ENCODE measurements at regions of chr3 and their contacts with region 1.

Region 1: DNA sequence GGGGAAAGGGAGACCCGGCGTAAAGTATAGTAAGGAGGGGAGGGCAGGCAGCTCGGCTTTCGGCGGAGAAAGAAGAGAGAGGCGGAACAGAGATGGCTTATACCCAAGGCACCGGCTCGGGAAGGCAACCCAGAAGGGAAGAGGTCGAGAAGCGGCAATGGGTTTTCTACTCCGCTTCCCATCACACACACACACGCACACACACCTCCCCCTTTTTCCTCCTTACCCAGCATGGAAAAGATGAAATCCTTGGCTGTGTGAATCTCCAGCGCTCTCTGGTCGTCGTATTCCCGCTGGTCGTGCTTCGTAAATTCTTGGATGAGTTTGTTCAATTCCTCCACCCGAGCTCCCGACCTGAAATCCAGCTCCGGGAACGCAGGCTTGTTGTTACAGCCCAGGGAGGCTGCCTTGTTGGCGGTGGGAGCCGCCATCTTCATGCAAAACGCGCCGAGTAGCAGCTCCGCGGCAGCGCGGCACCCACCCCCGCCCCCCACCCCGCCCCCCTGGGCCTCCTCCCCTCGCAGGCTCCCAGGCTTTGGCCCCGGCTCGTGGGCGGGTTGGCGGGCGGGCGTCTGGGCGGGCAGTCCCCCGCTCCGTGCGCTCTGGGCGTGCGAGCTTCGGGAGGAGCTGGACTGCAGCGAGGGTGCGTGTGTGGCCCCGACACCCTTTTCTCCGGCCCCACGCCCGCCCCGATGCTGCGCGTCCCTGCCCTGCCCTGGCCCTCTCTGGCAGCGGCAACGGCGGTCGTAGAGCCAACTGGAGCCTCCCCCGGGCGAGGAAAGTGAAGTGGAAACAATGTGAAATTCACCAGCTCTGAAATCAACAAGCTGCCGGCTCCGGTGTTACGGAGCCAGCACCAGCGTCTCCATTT is at the start of gene MB21D2:
- DNase-seq: peak; percentile 78 to 86
- H3K4me3 ChIP-seq: peak within 1 kb of the TSS; percentile 79
- H3K27ac ChIP-seq: peak within 1 kb of the TSS; percentile 79
- H3K4me1 ChIP-seq: peaks cover 29% of the 10 kb centered on the region
- H3K27me3 ChIP-seq: no peaks in the 10 kb centered on the region
- CTCF ChIP-seq: no peak
- total RNA-seq, gene MB21D2: 4.5 and 5.1 TPM in 2 replicates

Region 2: DNA sequence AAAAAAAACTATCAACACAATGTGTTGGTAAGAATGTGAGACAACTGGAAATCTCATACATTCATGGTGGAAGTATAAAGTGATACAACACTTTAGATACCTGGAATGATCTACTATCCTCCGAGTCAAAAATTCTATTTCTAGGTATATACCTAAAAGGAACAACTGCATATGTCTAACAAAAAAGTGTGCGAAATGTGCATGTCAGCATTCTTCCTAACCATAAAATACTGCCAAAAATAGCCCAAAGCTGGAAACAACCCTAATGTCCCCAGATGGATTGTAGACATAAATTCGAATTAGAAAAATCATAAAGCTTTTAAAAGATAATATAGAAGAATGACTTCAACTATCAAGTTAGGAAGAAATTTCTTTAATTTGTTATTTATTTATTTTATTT is 139.1 kb before region 1 on chr3:
- CTCF ChIA-PET with region 1: no interaction called
- POLR2A ChIA-PET with region 1: no interaction called
- intact Hi-C with region 1: no loop called
- DNase-seq: no peak
- H3K4me3 ChIP-seq: no peak overlapping the region
- H3K27ac ChIP-seq: no peak overlapping the region
- H3K4me1 ChIP-seq: no peaks in the 10 kb centered on the region
- H3K27me3 ChIP-seq: no peaks in the 10 kb centered on the region
- CTCF ChIP-seq: no peak

Region 3: DNA sequence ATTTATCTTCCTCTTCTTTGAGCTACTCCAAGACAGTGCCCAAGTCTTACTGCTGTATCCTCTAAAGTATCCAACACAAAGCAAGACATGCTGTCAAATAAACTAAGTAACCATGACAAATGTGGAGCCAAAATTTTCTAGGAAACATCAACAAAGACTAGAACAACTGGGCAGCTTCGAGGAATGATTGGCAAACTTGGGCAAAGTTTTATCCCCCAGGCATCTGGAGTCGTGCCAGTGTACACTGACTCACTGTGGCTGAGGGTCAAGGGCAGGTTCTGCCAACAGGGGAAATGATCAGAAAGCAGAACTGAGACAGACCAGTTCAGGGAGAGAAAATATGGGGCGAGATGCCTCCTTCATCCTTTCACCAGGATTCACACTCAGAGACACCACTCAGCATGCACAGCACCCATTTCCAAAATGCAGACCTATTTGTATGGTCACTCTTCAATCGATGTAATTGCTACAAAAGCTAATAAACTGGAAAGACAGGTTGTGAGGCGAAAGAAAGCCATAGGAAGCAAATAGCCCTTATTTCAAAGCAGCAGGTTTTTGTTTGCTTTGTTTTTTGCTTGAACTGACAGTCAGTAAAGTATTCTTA is 65.7 kb before region 1 on chr3:
- CTCF ChIA-PET with region 1: interaction called, 3 read pairs
- POLR2A ChIA-PET with region 1: no interaction called
- intact Hi-C with region 1: loop called (anchors 1 kb)
- DNase-seq: peak; percentile 99 to 100
- H3K4me3 ChIP-seq: no peak overlapping the region
- H3K27ac ChIP-seq: peak overlapping the region; percentile 17
- H3K4me1 ChIP-seq: peaks cover 27% of the 10 kb centered on the region
- H3K27me3 ChIP-seq: no peaks in the 10 kb centered on the region
- CTCF ChIP-seq: no peak

Region 4: DNA sequence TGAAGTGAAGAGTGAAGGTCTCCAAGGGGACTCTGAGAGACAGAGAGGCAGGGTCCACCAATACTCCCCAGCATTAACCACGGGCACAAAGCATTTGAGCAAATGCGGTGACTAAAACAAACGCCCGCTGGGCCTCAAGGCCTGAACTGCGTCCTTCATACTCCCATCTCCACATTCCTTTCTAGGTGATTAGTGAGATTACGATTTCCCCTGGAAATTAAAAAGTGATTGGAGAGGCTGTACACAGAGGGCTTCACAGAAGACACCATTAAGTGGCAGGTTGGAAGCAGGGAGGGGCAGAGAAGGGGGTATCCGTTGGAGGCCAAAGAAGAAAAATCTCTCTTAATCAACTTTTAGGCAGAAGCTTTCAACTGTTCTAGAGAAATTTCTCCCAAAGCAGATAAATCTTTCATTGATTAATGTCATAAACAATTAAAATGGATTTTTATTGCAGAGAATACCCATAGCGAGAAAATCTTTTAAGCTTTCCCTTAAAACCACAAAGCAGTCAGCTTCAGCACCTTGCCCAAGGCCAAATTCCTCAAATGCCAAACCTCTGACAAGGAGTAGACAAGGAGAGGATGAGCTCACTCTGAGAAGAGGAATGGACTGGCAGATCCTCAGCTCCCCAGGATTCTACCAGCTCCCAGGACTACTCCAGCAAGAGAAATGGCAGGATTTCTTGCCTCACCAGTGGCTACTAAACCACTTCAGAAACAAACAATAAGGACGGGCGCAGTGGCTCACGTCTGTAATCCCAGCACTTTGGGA is 38.1 kb before region 1 on chr3:
- CTCF ChIA-PET with region 1: interaction called, 3 read pairs
- POLR2A ChIA-PET with region 1: interaction called, 5 read pairs
- intact Hi-C with region 1: loop called (anchors 1 kb)
- DNase-seq: peak; percentile 92 to 100
- H3K4me3 ChIP-seq: peak overlapping the region; percentile 37; the same call in 1 of the 2 replicates
- H3K27ac ChIP-seq: no peak overlapping the region
- H3K4me1 ChIP-seq: peaks cover 42% of the 10 kb centered on the region
- H3K27me3 ChIP-seq: no peaks in the 10 kb centered on the region
- CTCF ChIP-seq: no peak

Region 5: GRCh38 chr3:192892981-192893700 is 24.5 kb before region 1 on chr3:
- CTCF ChIA-PET with region 1: interaction called, 4 read pairs
- POLR2A ChIA-PET with region 1: interaction called, 4 read pairs
- intact Hi-C with region 1: loop called (anchors 1 kb)
- DNase-seq: peak; percentile 89 to 99
- H3K4me3 ChIP-seq: peak overlapping the region; percentile 44; the same call in 1 of the 2 replicates
- H3K27ac ChIP-seq: peak overlapping the region; percentile 88
- H3K4me1 ChIP-seq: peaks cover 96% of the 10 kb centered on the region
- H3K27me3 ChIP-seq: no peaks in the 10 kb centered on the region
- CTCF ChIP-seq: no peak

Region 6: GRCh38 chr3:192929755-192930547 is 12.3 kb after region 1 on chr3:
- CTCF ChIA-PET with region 1: no interaction called
- POLR2A ChIA-PET with region 1: no interaction called
- intact Hi-C with region 1: no loop called
- DNase-seq: no peak
- H3K4me3 ChIP-seq: no peak overlapping the region
- H3K27ac ChIP-seq: no peak overlapping the region
- H3K4me1 ChIP-seq: no peaks in the 10 kb centered on the region
- H3K27me3 ChIP-seq: no peaks in the 10 kb centered on the region
- CTCF ChIP-seq: no peak

Region 7: DNA sequence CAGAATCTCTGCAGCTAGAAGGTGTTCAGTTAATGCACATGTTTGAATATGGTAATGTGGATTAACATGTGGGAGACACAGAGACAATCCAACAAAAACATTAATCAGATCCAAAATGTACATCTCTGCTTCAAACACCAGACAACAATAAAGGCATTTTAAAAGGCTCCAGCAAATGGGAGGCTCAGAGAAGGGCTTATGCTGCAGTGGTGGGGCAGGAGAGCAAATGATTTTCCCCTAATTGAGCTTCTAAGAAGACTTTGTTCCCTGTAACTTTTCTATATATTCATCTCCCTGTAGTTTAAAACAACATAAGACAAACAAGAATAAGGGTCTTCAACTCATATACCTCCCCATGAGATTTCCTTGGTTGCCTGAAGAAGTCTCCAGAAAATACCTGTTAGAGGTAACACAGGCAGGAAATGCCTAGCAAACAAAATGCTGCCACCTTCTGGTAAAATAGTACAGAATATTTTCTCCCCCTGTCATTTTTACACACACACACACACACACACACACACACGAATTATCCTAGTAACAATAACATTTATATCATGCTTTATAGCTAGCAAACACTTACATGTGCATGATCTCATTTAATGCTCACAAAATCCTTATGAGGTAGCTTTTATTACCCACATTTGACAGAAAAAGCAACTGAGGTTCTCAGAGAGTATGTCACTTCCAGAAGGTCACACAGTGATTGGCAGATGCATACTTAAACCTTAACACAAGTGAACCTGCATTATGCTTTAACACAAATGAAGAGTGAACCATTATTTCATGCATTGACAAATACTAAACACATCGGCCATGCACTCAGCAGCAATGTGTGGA is 123.4 kb after region 1 on chr3:
- CTCF ChIA-PET with region 1: interaction called, 3 read pairs
- POLR2A ChIA-PET with region 1: no interaction called
- intact Hi-C with region 1: loop called (anchors 1 kb)
- DNase-seq: peak in 1 of 2 experiments; percentile 58
- H3K4me3 ChIP-seq: no peak overlapping the region
- H3K27ac ChIP-seq: no peak overlapping the region
- H3K4me1 ChIP-seq: no peaks in the 10 kb centered on the region
- H3K27me3 ChIP-seq: no peaks in the 10 kb centered on the region
- CTCF ChIP-seq: peak; percentile 81

Region 8: DNA sequence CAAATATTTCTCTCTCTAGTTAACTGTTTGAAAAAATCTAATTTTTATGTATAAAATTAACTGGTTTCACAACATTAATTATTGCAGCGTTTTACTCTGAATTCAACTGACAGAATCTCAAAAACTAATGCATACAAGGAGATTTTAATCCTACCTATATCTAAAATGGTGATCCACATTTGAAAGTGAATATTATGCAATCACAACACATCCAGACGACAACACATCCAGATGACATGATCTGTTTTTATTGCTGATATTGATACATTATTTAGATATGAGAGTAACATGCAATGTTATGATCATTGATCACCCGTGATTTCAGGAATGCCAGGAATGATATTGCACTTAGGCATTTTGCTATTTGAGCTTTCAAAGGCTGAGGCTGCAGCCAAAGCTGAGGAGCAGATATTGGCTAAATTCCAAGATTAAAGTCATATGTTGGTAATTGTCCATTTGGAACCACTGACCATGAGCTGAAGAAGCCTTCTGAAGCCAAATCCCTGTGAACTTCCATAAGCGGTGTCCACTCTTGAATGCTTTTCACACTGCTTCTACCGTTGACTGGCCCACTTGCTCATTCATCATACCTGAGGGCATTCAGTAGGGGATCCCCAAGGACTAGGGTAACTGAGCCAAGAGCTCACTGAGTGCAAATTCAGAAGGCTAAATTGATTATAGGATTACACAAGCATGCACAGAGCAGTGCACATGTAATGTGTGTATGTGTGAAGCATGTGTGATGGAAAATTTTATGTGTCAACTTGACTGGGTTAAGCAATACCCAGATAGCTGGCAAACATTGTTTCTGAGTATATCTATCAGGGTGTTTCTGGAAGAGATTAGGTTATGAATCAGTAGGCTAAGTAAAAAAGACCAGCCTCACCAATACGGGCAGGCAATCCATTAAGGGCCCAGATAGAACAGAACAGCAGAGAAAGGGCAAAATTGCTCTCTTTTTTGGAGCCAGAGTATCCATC is 231.1 kb after region 1 on chr3:
- CTCF ChIA-PET with region 1: no interaction called
- POLR2A ChIA-PET with region 1: no interaction called
- intact Hi-C with region 1: no loop called
- DNase-seq: no peak
- H3K4me3 ChIP-seq: no peak overlapping the region
- H3K27ac ChIP-seq: no peak overlapping the region
- H3K4me1 ChIP-seq: no peaks in the 10 kb centered on the region
- H3K27me3 ChIP-seq: no peaks in the 10 kb centered on the region
- CTCF ChIP-seq: no peak

Region 9: GRCh38 chr3:193572426-193572908 is 654.8 kb after region 1 on chr3:
- CTCF ChIA-PET with region 1: no interaction called
- POLR2A ChIA-PET with region 1: no interaction called
- intact Hi-C with region 1: loop called (anchors 2 kb)
- DNase-seq: peak; percentile 69
- H3K4me3 ChIP-seq: no peak overlapping the region
- H3K27ac ChIP-seq: no peak overlapping the region
- H3K4me1 ChIP-seq: peaks cover 14% of the 10 kb centered on the region
- H3K27me3 ChIP-seq: no peaks in the 10 kb centered on the region
- CTCF ChIP-seq: peak; percentile 98

Region 10: DNA sequence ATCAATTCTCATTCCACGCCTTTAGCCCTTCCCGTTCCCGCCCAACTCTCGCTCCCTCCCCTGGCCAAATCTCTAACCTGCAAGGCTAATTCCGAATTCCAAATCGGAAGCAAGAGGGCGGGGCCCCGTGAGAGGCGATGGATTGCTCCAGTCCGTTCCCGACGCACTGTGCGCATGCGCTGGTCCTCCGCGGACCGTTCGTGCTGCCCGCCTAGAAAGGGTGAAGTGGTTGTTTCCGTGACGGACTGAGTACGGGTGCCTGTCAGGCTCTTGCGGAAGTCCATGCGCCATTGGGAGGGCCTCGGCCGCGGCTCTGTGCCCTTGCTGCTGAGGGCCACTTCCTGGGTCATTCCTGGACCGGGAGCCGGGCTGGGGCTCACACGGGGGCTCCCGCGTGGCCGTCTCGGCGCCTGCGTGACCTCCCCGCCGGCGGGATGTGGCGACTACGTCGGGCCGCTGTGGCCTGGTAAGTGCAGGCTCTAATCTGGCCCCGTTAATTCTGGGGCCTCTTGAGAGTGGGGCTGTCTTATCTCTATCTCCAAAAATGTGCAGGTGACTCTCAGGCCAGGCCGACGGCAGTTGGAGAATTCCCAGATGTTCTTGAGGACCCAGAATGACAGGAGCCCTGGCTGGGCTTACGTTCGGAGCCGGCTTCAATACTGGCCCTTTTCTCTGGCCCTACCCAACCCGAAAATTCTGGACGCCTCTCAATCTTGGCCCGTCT is 675.5 kb after region 1 on chr3 and contains the start of gene OPA1:
- CTCF ChIA-PET with region 1: no interaction called
- POLR2A ChIA-PET with region 1: no interaction called
- intact Hi-C with region 1: loop called (anchors 5 kb)
- DNase-seq: peak; percentile 98 to 99
- H3K4me3 ChIP-seq: peak within 1 kb of the TSS; percentile 89
- H3K27ac ChIP-seq: peak within 1 kb of the TSS; percentile 61
- H3K4me1 ChIP-seq: peaks cover 38% of the 10 kb centered on the region
- H3K27me3 ChIP-seq: no peaks in the 10 kb centered on the region
- CTCF ChIP-seq: no peak
- total RNA-seq, gene OPA1: 105 and 120 TPM in 2 replicates